ENCODE measurements at regions of chr3 and their contacts with region 1.

Region 1: DNA sequence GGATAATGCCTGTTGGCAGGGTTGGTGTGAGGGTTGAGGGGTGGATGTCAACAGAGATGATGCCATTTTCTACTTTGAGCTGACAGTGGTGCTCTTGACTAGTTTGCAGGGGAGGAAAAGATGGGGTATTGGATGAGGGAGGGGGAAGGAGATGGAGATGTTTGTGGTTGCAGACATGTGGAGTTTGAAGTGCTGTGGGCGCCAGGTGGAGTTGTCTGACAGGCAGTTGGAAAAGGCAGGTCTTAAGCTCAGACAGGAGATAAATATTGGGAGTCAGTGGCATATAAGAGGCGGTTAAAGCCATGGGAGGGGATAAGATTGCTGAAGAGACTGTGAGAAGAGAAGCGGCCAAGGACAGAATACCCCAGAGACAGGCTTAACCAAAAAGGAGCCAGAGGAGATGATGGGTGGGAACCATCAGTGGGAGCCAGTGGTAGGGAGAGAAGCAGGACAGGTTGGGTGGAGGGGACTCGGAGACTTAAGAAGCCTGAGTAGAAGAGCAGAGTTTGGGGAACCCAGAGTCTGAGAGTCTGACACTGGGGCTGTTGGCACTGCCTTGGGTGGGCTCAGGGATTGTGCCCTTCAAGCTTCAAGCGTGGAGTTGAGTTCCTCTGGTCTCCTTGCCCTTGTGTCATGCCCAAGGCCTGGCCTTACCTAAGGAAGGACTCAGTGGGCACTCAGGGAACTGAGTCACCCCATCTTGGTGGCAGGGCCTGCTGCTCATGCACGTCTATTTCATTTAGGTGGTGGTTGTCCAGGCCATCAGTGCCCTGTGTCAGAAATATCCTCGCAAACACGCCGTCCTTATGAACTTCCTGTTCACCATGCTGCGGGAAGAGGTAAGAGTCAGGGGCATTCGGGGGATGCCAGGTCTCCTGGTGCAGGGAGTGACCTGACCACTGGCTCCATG is 14.0 kb downstream of the COPG1 start:
- DNase-seq: peak in 1 of 5 donors; percentile 15
- H3K4me3 ChIP-seq: no peak overlapping the region
- H3K27ac ChIP-seq: no peak overlapping the region
- H3K4me1 ChIP-seq: no peaks in the 10 kb centered on the region
- H3K27me3 ChIP-seq: no peaks in the 10 kb centered on the region
- CTCF ChIP-seq: no peak
- EP300 ChIP-seq: no peak
- POLR2A ChIP-seq: no peak

Region 2: DNA sequence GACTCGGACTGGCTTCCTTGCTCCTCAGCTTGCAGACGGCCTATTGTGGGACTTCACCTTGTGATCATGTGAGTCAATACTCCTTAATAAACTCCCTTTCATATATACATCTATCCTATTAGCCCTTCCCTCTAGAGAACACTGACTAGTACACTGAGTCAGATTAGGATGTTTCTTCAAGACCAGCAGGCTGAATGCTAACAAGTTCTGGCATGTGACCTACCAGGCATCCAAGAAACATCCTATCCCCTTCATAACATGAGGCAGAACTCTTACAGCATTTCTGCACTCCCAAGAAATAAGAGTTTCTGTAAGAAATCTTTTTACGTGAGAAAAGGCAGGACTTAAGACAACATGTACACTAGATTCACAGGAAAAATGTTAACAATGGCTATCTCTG is 278.8 kb before region 1 on chr3:
- intact Hi-C with region 1: loop called in 1 of 4 experiments (anchors 10 kb)
- DNase-seq: no peak
- H3K4me3 ChIP-seq: no peak overlapping the region
- H3K27ac ChIP-seq: no peak overlapping the region
- H3K4me1 ChIP-seq: no peaks in the 10 kb centered on the region
- H3K27me3 ChIP-seq: no peaks in the 10 kb centered on the region
- CTCF ChIP-seq: no peak
- EP300 ChIP-seq: no peak
- POLR2A ChIP-seq: no peak

Region 3: GRCh38 chr3:129389572-129389937 is 126.1 kb after region 1 on chr3:
- intact Hi-C with region 1: no loop called
- DNase-seq: no peak
- H3K4me3 ChIP-seq: no peak overlapping the region
- H3K27ac ChIP-seq: peak overlapping the region in 1 of 2 donors; percentile 38
- H3K4me1 ChIP-seq: no peaks in the 10 kb centered on the region
- H3K27me3 ChIP-seq: no peaks in the 10 kb centered on the region
- CTCF ChIP-seq: no peak
- EP300 ChIP-seq: no peak
- POLR2A ChIP-seq: no peak